ENCODE measurements at regions of chr5 and their contacts with region 1.

Region 1: DNA sequence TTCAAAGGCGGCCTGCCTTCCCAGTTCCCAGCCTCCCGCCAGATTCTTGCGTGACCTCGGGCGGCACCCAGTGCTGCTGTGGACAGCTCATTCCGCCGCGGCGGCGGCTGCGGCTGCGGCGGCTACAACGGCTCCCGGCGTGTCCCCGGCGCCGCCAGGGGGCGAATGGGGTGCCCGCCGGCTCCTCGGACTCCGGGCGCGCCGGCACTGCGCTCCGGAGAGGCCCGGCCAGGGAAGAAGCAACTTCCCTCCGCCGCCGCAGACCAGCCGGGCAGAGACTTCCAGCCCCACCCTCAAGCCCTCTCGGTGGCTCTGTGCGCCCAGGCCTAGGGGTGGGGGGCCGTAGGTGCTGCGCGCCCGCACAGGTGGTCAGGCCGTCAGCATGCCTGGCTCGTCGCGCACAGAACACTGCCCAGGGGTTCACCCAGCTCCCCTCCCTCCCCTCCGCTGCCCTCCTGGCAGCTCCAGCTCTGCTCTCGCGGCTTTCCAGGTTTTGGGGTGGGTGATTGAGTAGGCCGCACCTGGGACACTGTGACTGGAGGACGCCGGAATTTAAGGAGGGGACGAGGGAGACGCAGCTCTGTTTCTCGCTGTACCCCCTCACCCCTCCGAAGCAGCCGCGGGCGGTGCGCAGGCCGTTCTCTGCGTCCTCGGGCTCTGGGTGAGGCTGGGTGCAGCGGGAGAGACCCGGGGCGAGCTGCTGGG is 20.2 kb downstream of the IGIP start:
- DNase-seq: peak; percentile 55 to 82
- ATAC-seq: peak; percentile 92 to 96 (median 94)
- H3K4me3 ChIP-seq: peak overlapping the region; percentile 30 to 62 (median 54)
- H3K27ac ChIP-seq: peak overlapping the region in 1 of 10 donors; percentile 39
- H3K4me1 ChIP-seq: peaks cover 6 to 28% (median 18%) of the 10 kb centered on the region in 9 donors
- H3K27me3 ChIP-seq: peaks cover 0 to 29% (median 0%) of the 10 kb centered on the region in 7 donors
- CTCF ChIP-seq: peak; percentile 65 to 93 (median 82)

Region 2: DNA sequence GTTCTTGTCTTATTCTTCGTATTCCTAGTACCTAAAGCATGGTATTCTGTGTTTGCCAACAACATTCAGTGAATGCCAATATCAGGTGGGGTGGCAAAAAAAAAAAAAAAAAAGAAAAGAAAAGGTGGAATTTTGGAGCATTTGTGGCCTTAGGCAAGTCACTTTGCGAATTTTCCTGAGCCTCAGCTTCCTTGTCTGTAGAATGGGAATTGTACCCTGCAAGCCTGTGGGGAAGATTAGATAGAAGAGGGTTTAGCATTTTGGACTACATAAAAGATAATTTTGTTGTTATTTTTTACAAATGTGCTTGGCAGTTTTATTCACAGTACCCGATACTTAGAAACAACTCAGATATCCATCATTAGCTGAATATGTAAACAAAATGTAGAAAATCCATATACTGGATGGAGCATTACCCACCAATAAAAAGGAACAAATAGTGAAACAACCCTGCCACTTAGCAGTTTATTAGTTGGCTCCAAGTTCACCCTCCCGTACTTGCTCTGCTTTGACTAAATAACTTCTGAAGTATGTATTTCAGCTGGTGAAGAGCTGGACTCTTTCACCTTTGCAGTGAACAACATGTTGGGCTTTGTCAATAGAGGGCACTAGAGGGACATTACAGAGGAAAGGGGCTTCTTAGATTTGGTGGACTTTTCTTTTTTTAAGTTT is 571.2 kb before region 1 on chr5:
- intact Hi-C with region 1: no loop called
- DNase-seq: no peak
- ATAC-seq: peak in 3 of 8 donors; percentile 43 to 57 (median 50)
- H3K4me3 ChIP-seq: no peak overlapping the region
- H3K27ac ChIP-seq: no peak overlapping the region
- H3K4me1 ChIP-seq: peaks cover 9 to 89% (median 71%) of the 10 kb centered on the region in 9 donors
- H3K27me3 ChIP-seq: no peaks in the 10 kb centered on the region
- CTCF ChIP-seq: peak; percentile 9 to 74 (median 60)

Region 3: GRCh38 chr5:140107312-140108083 is 38.5 kb before region 1 on chr5:
- intact Hi-C with region 1: loop called in 4 of 10 experiments (anchors 5 kb)
- DNase-seq: peak; percentile 93 to 95
- ATAC-seq: peak; percentile 97 to 99 (median 98)
- H3K4me3 ChIP-seq: peak overlapping the region; percentile 61 to 85 (median 76)
- H3K27ac ChIP-seq: peak overlapping the region; percentile 94 to 100 (median 98)
- H3K4me1 ChIP-seq: peaks cover 0 to 53% (median 39%) of the 10 kb centered on the region in 9 donors
- H3K27me3 ChIP-seq: peaks cover 0 to 45% (median 0%) of the 10 kb centered on the region in 7 donors
- CTCF ChIP-seq: peak in 6 of 9 donors; percentile 2 to 53 (median 36)

Region 4: DNA sequence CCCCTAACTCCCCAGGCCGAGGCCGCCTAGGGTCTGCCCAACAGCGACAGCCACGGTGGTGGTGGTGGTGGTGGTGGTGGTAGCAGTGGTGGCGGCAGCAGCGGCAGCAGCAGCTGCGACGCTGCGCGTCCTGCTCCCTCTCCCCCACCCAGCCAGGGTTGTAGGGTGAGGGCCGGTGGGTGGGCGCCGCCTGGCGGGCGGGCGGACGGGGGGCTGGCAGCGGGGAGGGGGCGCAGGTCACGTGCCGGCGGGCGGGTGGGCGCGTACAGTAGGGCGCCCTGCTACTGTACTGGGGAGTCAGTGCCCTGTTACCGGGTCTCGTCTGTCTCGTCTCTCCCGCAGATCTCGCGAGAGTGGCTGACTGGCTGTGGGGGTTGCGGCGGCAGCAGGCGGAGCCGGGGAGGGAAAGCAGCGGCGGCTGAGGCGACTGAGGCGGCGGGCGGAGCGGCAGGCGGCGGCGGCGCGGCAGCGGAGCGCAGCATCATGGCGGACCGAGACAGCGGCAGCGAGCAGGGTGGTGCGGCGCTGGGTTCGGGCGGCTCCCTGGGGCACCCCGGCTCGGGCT is 32.2 kb before region 1 on chr5 and contains the start of gene PURA:
- intact Hi-C with region 1: loop called in 5 of 10 experiments (anchors 2 to 5 kb)
- DNase-seq: peak; percentile 97
- ATAC-seq: peak; percentile 90 to 97 (median 96)
- H3K4me3 ChIP-seq: peak within 1 kb of the TSS; percentile 55 to 89 (median 76)
- H3K27ac ChIP-seq: peak within 1 kb of the TSS; percentile 74 to 95 (median 90)
- H3K4me1 ChIP-seq: peaks cover 3 to 84% (median 75%) of the 10 kb centered on the region in 9 donors
- H3K27me3 ChIP-seq: peaks cover 0 to 25% (median 0%) of the 10 kb centered on the region in 7 donors
- CTCF ChIP-seq: peak in 7 of 9 donors; percentile 16 to 54 (median 29)
- total RNA-seq, gene PURA: 19.4 to 27.7 (median 24.5) TPM

Region 5: GRCh38 chr5:141017943-141018342 is 872.0 kb after region 1 on chr5:
- intact Hi-C with region 1: no loop called
- DNase-seq: no peak
- ATAC-seq: no peak
- H3K4me3 ChIP-seq: no peak overlapping the region
- H3K27ac ChIP-seq: no peak overlapping the region
- H3K4me1 ChIP-seq: no peaks in the 10 kb centered on the region
- H3K27me3 ChIP-seq: peaks cover 0 to 4% (median 0%) of the 10 kb centered on the region in 7 donors
- CTCF ChIP-seq: no peak